IMR-90 (cell line): ENCODE measurements at regions of chr4 and their contacts with region 1.

Region 1: GRCh38 chr4:120156120-120156718 is 89.6 kb upstream of the MAD2L1 start:
- DNase-seq: peak; percentile 80
- ATAC-seq: peak; percentile 78; the same call in 1 of the 2 replicates
- H3K4me3 ChIP-seq: no peak overlapping the region
- H3K27ac ChIP-seq: no peak overlapping the region
- H3K4me1 ChIP-seq: no peaks in the 10 kb centered on the region
- H3K27me3 ChIP-seq: 0 out of 2 replicates have a peak, but pooled peaks cover 2% of the 10 kb centered on the region
- CTCF ChIP-seq: peak; percentile 67
- POLR2A ChIP-seq: no peak
- RAD21 ChIP-seq: peak; percentile 60

Region 2: GRCh38 chr4:120718979-120719566 is 562.9 kb after region 1 on chr4:
- CTCF ChIA-PET with region 1: no interaction called
- POLR2A ChIA-PET with region 1: no interaction called
- dilution Hi-C with region 1: no loop called
- in situ Hi-C with region 1: no loop called
- intact Hi-C with region 1: loop called (anchors 5 kb)
- DNase-seq: peak; percentile 49
- ATAC-seq: peak; percentile 93
- H3K4me3 ChIP-seq: no peak overlapping the region
- H3K27ac ChIP-seq: no peak overlapping the region
- H3K4me1 ChIP-seq: 0 out of 2 replicates have a peak, but pooled peaks cover 2% of the 10 kb centered on the region
- H3K27me3 ChIP-seq: no peaks in the 10 kb centered on the region
- CTCF ChIP-seq: peak; percentile 73
- POLR2A ChIP-seq: no peak
- RAD21 ChIP-seq: peak; percentile 87

Region 3: DNA sequence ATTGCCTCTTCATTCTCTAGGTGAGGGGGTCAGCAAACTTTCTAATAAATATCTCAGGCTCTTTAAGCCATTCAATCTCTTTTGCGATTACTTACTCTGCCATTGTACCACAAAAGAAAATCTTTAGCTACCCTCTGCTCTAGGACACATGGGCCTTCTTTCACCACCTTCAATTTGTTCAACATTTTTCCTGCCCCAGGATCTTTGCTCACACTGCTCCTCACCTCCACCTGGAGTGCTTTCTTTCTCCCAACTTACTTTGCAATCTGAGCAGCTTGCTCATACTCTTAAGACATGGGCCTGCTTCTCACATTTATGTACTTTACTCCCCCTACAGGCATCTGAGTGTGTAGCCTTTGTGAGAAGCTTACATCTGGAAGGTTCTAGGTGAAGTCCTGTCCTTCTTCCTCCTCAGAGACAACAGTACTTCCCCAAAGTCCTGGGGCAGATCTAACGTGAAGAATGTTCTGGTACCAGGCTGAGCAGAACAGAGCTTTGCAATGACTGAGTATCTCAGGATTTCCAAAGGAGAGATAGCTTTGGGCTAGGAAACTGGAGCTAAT is 821.3 kb after region 1 on chr4:
- CTCF ChIA-PET with region 1: no interaction called
- POLR2A ChIA-PET with region 1: no interaction called
- dilution Hi-C with region 1: no loop called
- in situ Hi-C with region 1: no loop called
- intact Hi-C with region 1: loop called (anchors 2 kb)
- DNase-seq: peak; percentile 70
- ATAC-seq: peak; percentile 92
- H3K4me3 ChIP-seq: no peak overlapping the region
- H3K27ac ChIP-seq: no peak overlapping the region
- H3K4me1 ChIP-seq: no peaks in the 10 kb centered on the region
- H3K27me3 ChIP-seq: no peaks in the 10 kb centered on the region; the same call in 1 of the 2 replicates
- CTCF ChIP-seq: peak; percentile 68
- POLR2A ChIP-seq: no peak
- RAD21 ChIP-seq: peak; percentile 72

Region 4: GRCh38 chr4:121096629-121097028 is 940.4 kb after region 1 on chr4:
- CTCF ChIA-PET with region 1: no interaction called
- POLR2A ChIA-PET with region 1: no interaction called
- dilution Hi-C with region 1: no loop called
- in situ Hi-C with region 1: loop called (anchors 10 kb)
- intact Hi-C with region 1: loop called (anchors 1 kb)
- DNase-seq: peak; percentile 52
- ATAC-seq: 0 out of 2 replicates have a peak, but pooled peaks have one; percentile 29
- H3K4me3 ChIP-seq: no peak overlapping the region
- H3K27ac ChIP-seq: no peak overlapping the region
- H3K4me1 ChIP-seq: no peaks in the 10 kb centered on the region
- H3K27me3 ChIP-seq: peaks cover 2% of the 10 kb centered on the region; the same call in 1 of the 2 replicates
- CTCF ChIP-seq: peak; percentile 73
- POLR2A ChIP-seq: no peak
- RAD21 ChIP-seq: peak; percentile 72